CD14-positive monocyte (primary cell): ENCODE measurements at regions of chr19 and their contacts with region 1.

Region 1: GRCh38 chr19:10565567-10566407 is at the start of gene KRI1:
- DNase-seq: peak; percentile 99
- H3K4me3 ChIP-seq: peak within 1 kb of the TSS; percentile 92 to 100 (median 98)
- H3K4me3 Mint-ChIP-seq: peak within 1 kb of the TSS; percentile 92 to 99
- H3K27ac ChIP-seq: peak within 1 kb of the TSS; percentile 84 to 90
- H3K27ac Mint-ChIP-seq: peak within 1 kb of the TSS; percentile 93 to 100 (median 98)
- H3K4me1 ChIP-seq: peaks cover 38 to 44% of the 10 kb centered on the region in 2 donors
- H3K4me1 Mint-ChIP-seq: peaks cover 35% of the 10 kb centered on the region
- H3K27me3 ChIP-seq: no peaks in the 10 kb centered on the region
- H3K27me3 Mint-ChIP-seq: peaks cover 0 to 1% (median 0%) of the 10 kb centered on the region in 3 donors
- CTCF ChIP-seq: peak; percentile 54
- polyA plus RNA-seq, gene KRI1: 3.9 to 21.0 (median 6.1) TPM

Region 2: DNA sequence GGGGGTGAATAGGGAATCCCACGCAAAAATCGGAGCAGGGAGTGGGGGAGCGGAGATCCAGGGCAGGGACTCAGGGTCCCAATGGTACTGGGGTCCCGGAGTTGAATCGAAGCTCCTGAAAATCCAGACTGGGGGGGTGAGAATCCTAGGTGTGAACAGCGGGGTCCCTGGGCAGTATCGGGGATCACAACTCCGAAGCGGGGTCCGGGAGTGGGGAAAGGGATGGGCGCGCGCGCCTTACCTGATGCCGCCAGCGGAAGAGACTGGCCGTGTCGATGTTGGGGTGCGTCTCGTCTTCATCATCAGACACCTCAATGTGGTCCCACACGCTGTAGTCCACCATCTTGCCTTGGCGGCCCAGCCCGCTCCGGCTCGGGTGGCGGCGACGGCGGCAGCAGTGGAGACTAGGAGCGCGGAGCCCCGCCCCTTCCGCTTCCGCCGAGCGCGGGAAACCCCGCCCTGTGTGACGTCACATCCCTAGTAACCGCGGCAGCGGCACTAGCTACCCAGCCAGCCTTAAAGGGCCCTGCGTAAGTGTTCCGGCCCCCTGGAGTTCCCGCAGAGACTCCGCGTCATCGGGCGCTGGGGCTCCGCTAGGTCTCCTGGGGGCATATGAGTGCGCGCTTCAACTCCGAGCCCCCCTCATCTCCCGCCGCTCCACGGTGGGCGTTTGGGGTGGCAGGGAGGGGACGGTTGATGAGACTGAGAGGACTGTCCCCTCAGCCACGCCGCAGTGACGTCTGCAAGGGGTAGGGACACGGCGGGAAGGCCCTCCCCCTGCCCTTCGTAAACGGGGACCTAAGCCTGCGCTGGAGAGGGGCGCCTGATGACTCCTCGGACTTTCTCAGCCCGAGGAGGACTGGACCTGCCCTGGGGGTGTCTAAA is 162.4 kb before region 1 on chr19 and contains the start of gene CDC37:
- intact Hi-C with region 1: loop called in 1 of 2 experiments (anchors 10 kb)
- DNase-seq: peak; percentile 97 to 98 (median 98)
- H3K4me3 ChIP-seq: peak within 1 kb of the TSS; percentile 91 to 98 (median 92)
- H3K4me3 Mint-ChIP-seq: peak within 1 kb of the TSS; percentile 94 to 95
- H3K27ac ChIP-seq: peak within 1 kb of the TSS; percentile 73 to 89
- H3K27ac Mint-ChIP-seq: peak within 1 kb of the TSS; percentile 92 to 99 (median 97)
- H3K4me1 ChIP-seq: peaks cover 74 to 81% of the 10 kb centered on the region in 2 donors
- H3K4me1 Mint-ChIP-seq: peaks cover 67% of the 10 kb centered on the region
- H3K27me3 ChIP-seq: peaks cover 3 to 15% of the 10 kb centered on the region in 2 donors
- H3K27me3 Mint-ChIP-seq: peaks cover 15 to 23% (median 17%) of the 10 kb centered on the region in 3 donors
- CTCF ChIP-seq: no peak
- polyA plus RNA-seq, gene CDC37: 49.3 to 575 (median 54.9) TPM

Region 3: DNA sequence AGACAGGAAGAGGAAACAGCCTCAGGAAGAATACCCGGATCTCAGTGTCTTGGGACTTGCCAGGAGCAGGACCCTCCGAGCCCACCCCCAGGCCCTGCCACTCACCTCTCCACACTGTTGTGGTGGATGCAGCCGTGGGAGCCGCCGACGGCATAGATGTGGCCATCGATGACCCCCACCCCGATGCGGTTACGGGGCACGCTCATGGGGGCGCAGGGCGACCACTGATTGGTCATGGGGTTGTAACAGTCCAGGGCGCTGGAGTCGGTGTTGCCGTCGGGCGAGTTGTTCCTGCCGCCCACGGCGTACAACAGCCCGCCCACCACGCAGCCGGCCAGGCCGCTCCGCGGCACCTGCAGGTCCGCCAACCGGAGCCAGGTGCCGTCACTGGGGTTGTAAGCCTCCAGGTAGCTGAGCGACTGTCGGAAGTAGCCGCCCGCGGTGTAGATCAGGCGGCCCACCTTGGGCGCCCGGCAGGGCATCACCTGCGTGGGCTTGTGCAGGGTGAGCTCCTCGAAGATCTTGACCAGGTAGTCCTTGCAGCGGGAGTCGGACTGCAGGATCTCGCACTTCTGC is 74.2 kb before region 1 on chr19:
- intact Hi-C with region 1: no loop called
- DNase-seq: no peak
- H3K4me3 ChIP-seq: no peak overlapping the region
- H3K4me3 Mint-ChIP-seq: no peak overlapping the region
- H3K27ac ChIP-seq: no peak overlapping the region
- H3K27ac Mint-ChIP-seq: peak overlapping the region in 2 of 7 donors; percentile 38 to 60
- H3K4me1 ChIP-seq: no peaks in the 10 kb centered on the region
- H3K4me1 Mint-ChIP-seq: no peaks in the 10 kb centered on the region
- H3K27me3 ChIP-seq: no peaks in the 10 kb centered on the region
- H3K27me3 Mint-ChIP-seq: no peaks in the 10 kb centered on the region
- CTCF ChIP-seq: no peak

Region 4: DNA sequence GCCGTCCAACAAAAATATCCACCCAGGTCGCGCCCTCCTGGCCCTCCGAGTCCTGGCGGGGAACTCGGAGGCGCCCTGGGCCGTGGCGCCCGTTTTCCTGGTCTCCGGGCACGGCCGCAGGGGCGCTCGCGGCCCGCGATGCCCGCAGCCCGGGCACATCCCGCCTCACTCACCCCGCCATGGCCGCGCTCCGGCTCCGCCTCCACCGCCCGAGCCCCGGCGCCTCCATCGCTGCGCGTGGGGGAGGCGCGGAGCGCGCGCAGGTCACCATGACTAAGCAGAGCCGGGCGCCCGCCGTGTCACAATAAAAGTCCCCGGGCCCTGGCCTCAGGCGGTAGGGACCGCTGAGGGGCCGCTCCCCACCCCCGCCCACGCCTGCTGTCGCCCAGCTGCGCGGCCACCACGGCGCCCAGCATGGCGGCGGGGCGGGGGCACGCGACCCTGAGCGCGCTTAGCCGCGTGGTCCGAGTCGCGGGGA is 63.2 kb before region 1 on chr19:
- intact Hi-C with region 1: loop called in 1 of 2 experiments (anchors 5 kb)
- DNase-seq: peak; percentile 85 to 88 (median 88)
- H3K4me3 ChIP-seq: peak overlapping the region; percentile 89 to 99 (median 91)
- H3K4me3 Mint-ChIP-seq: peak overlapping the region; percentile 88 to 93
- H3K27ac ChIP-seq: peak overlapping the region; percentile 88 to 89
- H3K27ac Mint-ChIP-seq: peak overlapping the region; percentile 89 to 96 (median 93)
- H3K4me1 ChIP-seq: peaks cover 14 to 28% of the 10 kb centered on the region in 2 donors
- H3K4me1 Mint-ChIP-seq: peaks cover 33% of the 10 kb centered on the region
- H3K27me3 ChIP-seq: no peaks in the 10 kb centered on the region
- H3K27me3 Mint-ChIP-seq: peaks cover 0 to 5% (median 2%) of the 10 kb centered on the region in 3 donors
- CTCF ChIP-seq: no peak

Region 5: DNA sequence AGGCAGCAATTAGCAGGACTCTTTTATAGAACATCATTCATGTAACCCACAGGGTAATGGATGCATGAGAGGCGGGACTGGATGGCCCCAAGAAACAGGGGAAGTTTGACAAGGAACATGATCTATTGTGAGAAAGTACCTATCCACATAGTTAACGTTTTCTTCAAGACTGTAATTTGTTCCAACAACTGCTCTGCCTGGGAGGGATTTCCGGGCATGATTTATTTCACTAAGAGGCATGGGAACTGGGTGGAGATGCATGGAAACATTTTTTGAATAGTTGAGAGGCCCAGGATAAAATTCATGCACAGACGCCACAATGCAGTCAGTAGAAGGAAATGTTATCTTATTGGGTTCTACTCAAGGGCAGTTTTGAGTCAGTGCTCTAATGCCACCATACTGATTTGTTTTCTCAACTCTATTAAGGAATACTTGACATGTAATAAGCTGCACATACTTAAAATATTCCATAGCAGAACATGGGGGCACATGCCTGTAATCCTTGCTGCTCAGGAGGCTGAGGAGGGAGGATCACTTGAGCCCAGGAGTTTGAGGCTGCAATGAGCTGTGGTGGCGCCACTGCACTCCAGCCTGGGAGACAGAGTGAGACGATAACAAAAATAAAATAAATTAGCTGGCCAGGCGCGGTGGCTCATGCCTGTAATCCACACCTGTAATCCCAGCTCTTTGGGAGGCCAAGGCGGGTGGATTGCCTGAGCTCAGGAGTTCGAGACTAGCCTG is 32.0 kb before region 1 on chr19:
- intact Hi-C with region 1: no loop called
- DNase-seq: no peak
- H3K4me3 ChIP-seq: no peak overlapping the region
- H3K4me3 Mint-ChIP-seq: no peak overlapping the region
- H3K27ac ChIP-seq: no peak overlapping the region
- H3K27ac Mint-ChIP-seq: peak overlapping the region in 1 of 7 donors; percentile 53
- H3K4me1 ChIP-seq: peaks cover 6 to 10% of the 10 kb centered on the region in 2 donors
- H3K4me1 Mint-ChIP-seq: peaks cover 8% of the 10 kb centered on the region
- H3K27me3 ChIP-seq: peaks cover 0 to 5% of the 10 kb centered on the region in 2 donors
- H3K27me3 Mint-ChIP-seq: peaks cover 4 to 20% (median 19%) of the 10 kb centered on the region in 3 donors
- CTCF ChIP-seq: no peak

Region 6: DNA sequence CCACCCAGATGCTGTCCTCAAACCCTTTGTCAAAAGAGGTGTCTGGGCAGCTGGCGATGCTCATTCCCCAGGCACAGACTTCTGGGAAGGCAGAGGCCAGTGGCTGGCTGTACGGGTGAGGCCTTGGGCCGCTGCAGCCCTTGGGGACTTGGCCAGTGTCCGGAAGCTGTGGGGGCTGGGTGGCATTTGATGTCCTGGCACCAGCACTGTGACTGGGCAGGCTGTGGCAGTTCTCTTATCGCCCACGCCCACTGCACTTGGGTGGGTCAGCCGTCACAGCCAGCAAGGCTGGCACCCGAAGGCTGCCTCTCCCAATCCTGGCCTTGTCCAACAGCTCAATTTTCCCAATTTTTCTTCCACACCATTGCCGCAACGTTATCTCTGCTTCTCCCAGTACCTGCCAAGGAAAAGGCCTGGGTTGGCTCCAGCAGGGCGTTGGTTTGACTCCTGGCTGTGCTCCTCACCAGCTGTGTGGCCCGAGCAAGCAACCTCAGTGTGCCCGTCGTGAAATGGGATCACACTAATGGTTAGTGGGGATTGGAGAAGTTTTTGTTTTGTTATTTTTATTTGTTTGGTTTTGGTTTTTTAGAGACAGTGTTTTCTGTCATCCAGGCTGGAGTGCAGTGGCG is 46.8 kb after region 1 on chr19:
- intact Hi-C with region 1: no loop called
- DNase-seq: no peak
- H3K4me3 ChIP-seq: no peak overlapping the region
- H3K4me3 Mint-ChIP-seq: no peak overlapping the region
- H3K27ac ChIP-seq: no peak overlapping the region
- H3K27ac Mint-ChIP-seq: no peak overlapping the region
- H3K4me1 ChIP-seq: peaks cover 10 to 18% of the 10 kb centered on the region in 2 donors
- H3K4me1 Mint-ChIP-seq: peaks cover 24% of the 10 kb centered on the region
- H3K27me3 ChIP-seq: no peaks in the 10 kb centered on the region
- H3K27me3 Mint-ChIP-seq: peaks cover 0 to 3% (median 3%) of the 10 kb centered on the region in 3 donors
- CTCF ChIP-seq: no peak

Region 7: GRCh38 chr19:10653715-10654492 is 88.1 kb after region 1 on chr19 and contains the start of gene ILF3:
- intact Hi-C with region 1: loop called in 1 of 2 experiments (anchors 5 kb)
- DNase-seq: peak; percentile 100
- H3K4me3 ChIP-seq: peak within 1 kb of the TSS; percentile 74 to 93 (median 90)
- H3K4me3 Mint-ChIP-seq: peak within 1 kb of the TSS; percentile 90 to 93
- H3K27ac ChIP-seq: peak within 1 kb of the TSS; percentile 95 to 96
- H3K27ac Mint-ChIP-seq: peak within 1 kb of the TSS; percentile 97 to 99 (median 98)
- H3K4me1 ChIP-seq: peaks cover 30 to 38% of the 10 kb centered on the region in 2 donors
- H3K4me1 Mint-ChIP-seq: peaks cover 40% of the 10 kb centered on the region
- H3K27me3 ChIP-seq: no peaks in the 10 kb centered on the region
- H3K27me3 Mint-ChIP-seq: peaks cover 0 to 7% (median 1%) of the 10 kb centered on the region in 3 donors
- CTCF ChIP-seq: no peak
- polyA plus RNA-seq, gene ILF3: 34.4 to 189 (median 48.1) TPM

Region 8: DNA sequence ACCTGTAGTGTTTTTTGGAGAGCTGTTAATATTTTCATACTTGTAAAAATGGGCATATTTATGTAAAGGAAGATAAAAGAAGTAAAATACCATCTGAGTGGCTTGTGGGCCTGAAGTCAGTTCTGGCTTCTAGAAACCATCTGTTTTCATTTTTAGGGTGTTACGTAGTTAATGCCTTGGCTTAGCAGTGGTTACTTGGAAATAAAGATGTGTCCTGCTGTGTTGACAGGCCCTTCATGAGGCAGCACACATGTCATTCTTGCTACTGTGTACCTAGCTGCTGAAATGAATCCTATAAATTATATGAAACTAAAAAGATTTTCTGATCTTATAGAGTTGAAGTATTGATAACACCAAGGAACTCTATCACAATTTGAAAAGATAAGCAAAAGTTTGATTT is 104.4 kb after region 1 on chr19:
- intact Hi-C with region 1: no loop called
- DNase-seq: no peak
- H3K4me3 ChIP-seq: no peak overlapping the region
- H3K4me3 Mint-ChIP-seq: no peak overlapping the region
- H3K27ac ChIP-seq: no peak overlapping the region
- H3K27ac Mint-ChIP-seq: peak overlapping the region in 2 of 7 donors; percentile 24 to 74
- H3K4me1 ChIP-seq: peaks cover 6 to 12% of the 10 kb centered on the region in 2 donors
- H3K4me1 Mint-ChIP-seq: peaks cover 25% of the 10 kb centered on the region
- H3K27me3 ChIP-seq: no peaks in the 10 kb centered on the region
- H3K27me3 Mint-ChIP-seq: no peaks in the 10 kb centered on the region
- CTCF ChIP-seq: no peak

Region 9: GRCh38 chr19:10835754-10836477 is 270.1 kb after region 1 on chr19 and contains the start of gene TMED1:
- intact Hi-C with region 1: loop called in 1 of 2 experiments (anchors 2 kb)
- DNase-seq: peak; percentile 98 to 99 (median 99)
- H3K4me3 ChIP-seq: peak within 1 kb of the TSS; percentile 50 to 86 (median 72)
- H3K4me3 Mint-ChIP-seq: peak within 1 kb of the TSS; percentile 93 to 95
- H3K27ac ChIP-seq: peak within 1 kb of the TSS; percentile 85 to 94
- H3K27ac Mint-ChIP-seq: peak within 1 kb of the TSS; percentile 97 to 100 (median 99)
- H3K4me1 ChIP-seq: peaks cover 15 to 18% of the 10 kb centered on the region in 2 donors
- H3K4me1 Mint-ChIP-seq: peaks cover 11% of the 10 kb centered on the region
- H3K27me3 ChIP-seq: no peaks in the 10 kb centered on the region
- H3K27me3 Mint-ChIP-seq: peaks cover 0 to 9% (median 3%) of the 10 kb centered on the region in 3 donors
- CTCF ChIP-seq: no peak
- polyA plus RNA-seq, gene TMED1: 23.2 to 56.7 (median 51.3) TPM